PC-9 (cell line): ENCODE measurements at regions of chr2 and their contacts with region 1.

Region 1: GRCh38 chr2:179264368-179265081 is at the start of gene SESTD1:
- DNase-seq: peak in 1 of 2 experiments; percentile 83
- H3K4me3 ChIP-seq: peak within 1 kb of the TSS; percentile 95
- H3K27ac ChIP-seq: peak within 1 kb of the TSS; percentile 42
- H3K4me1 ChIP-seq: peaks cover 74% of the 10 kb centered on the region
- H3K27me3 ChIP-seq: no peaks in the 10 kb centered on the region
- CTCF ChIP-seq: no peak
- total RNA-seq, gene SESTD1: 208 and 279 TPM in 2 replicates

Region 2: DNA sequence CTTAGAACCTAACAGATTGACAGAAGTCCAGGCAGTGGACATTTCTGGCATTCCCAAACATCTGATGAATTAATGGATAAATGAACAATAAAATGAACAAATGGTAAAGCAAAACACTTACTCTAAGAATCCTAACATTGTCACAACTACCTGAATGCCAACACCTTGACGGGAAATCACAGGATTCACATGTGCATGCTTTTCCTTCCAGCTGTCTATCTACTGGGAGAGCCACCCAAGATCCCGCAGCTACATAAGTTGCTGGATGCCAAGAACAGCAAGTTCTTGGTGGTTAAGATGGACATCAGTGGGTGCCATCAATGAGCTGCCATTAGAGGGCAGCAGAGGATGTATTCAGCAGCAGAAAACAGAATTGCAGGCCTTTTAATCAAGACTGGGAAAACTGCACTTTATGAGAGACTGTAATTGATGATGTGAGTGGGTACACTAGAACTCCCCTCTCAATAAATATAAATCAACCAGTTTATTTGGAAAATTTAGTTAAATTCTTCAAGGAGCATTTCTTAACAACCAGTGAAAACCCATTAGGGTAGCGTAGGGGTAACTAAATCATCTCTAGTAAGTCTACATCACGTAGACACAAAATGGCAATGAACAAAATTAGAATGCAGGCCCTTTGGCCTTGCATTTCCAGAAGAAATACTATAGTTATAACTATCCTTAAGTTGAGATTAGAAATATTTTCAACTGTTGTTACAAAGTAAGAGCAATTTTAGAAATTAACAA is 45.5 kb before region 1 on chr2:
- CTCF ChIA-PET with region 1: no interaction called
- POLR2A ChIA-PET with region 1: no interaction called
- intact Hi-C with region 1: loop called (anchors 2 kb)
- DNase-seq: peak; percentile 48 to 71
- H3K4me3 ChIP-seq: no peak overlapping the region
- H3K27ac ChIP-seq: no peak overlapping the region
- H3K4me1 ChIP-seq: peaks cover 15% of the 10 kb centered on the region; the same call in 1 of the 2 replicates
- H3K27me3 ChIP-seq: no peaks in the 10 kb centered on the region
- CTCF ChIP-seq: peak; percentile 99

Region 3: GRCh38 chr2:179332904-179333303 is 68.4 kb after region 1 on chr2:
- CTCF ChIA-PET with region 1: interaction called, 9 read pairs
- POLR2A ChIA-PET with region 1: interaction called, 5 read pairs
- intact Hi-C with region 1: loop called (anchors 1 kb)
- DNase-seq: peak; percentile 38 to 86
- H3K4me3 ChIP-seq: no peak overlapping the region
- H3K27ac ChIP-seq: no peak overlapping the region
- H3K4me1 ChIP-seq: peaks cover 17% of the 10 kb centered on the region
- H3K27me3 ChIP-seq: no peaks in the 10 kb centered on the region
- CTCF ChIP-seq: no peak

Region 4: GRCh38 chr2:179410552-179411356 is 146.2 kb after region 1 on chr2:
- CTCF ChIA-PET with region 1: no interaction called
- POLR2A ChIA-PET with region 1: no interaction called
- intact Hi-C with region 1: no loop called
- DNase-seq: peak; percentile 44 to 50
- H3K4me3 ChIP-seq: no peak overlapping the region
- H3K27ac ChIP-seq: no peak overlapping the region
- H3K4me1 ChIP-seq: no peaks in the 10 kb centered on the region
- H3K27me3 ChIP-seq: no peaks in the 10 kb centered on the region
- CTCF ChIP-seq: peak; percentile 82

Region 5: GRCh38 chr2:179454443-179455171 is 190.1 kb after region 1 on chr2:
- CTCF ChIA-PET with region 1: no interaction called
- POLR2A ChIA-PET with region 1: interaction called, 18 read pairs
- intact Hi-C with region 1: no loop called
- DNase-seq: peak; percentile 40 to 73
- H3K4me3 ChIP-seq: no peak overlapping the region
- H3K27ac ChIP-seq: no peak overlapping the region
- H3K4me1 ChIP-seq: no peaks in the 10 kb centered on the region; the same call in 1 of the 2 replicates
- H3K27me3 ChIP-seq: no peaks in the 10 kb centered on the region
- CTCF ChIP-seq: no peak